ENCODE measurements at regions of chr5 and their contacts with region 1.

Region 1: GRCh38 chr5:95631991-95632675 is 12.2 kb downstream of the GPR150 start:
- DNase-seq: peak; percentile 85
- ATAC-seq: peak; percentile 100
- H3K4me3 Mint-ChIP-seq: no peak overlapping the region
- H3K27ac Mint-ChIP-seq: peak overlapping the region; percentile 83
- H3K4me1 Mint-ChIP-seq: peaks cover 15% of the 10 kb centered on the region
- H3K27me3 Mint-ChIP-seq: peaks cover 11% of the 10 kb centered on the region

Region 2: DNA sequence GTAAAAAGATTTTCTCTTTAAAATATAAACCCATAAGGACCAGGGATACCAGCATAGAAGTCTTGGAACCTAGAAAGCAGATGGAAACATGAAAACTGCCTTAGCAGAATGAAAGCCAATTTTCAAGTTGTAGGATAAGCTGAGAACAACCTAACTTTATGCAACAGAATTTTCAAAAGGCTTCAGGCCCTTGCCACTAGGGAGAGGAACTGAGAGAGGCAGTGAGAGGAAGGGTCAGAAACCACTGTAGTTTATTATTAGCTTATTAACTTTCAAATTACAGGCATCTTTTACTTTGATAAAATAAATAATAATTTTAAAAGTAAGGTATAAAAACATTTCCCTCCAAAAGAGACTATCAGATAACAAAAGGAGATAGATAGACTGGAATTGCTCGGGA is 207.6 kb before region 1 on chr5:
- CTCF ChIA-PET with region 1: no interaction called
- DNase-seq: no peak
- ATAC-seq: no peak
- H3K4me3 Mint-ChIP-seq: no peak overlapping the region
- H3K27ac Mint-ChIP-seq: no peak overlapping the region
- H3K4me1 Mint-ChIP-seq: no peaks in the 10 kb centered on the region
- H3K27me3 Mint-ChIP-seq: no peaks in the 10 kb centered on the region

Region 3: GRCh38 chr5:95526871-95527270 is 105.3 kb before region 1 on chr5:
- CTCF ChIA-PET with region 1: no interaction called
- DNase-seq: no peak
- ATAC-seq: no peak
- H3K4me3 Mint-ChIP-seq: no peak overlapping the region
- H3K27ac Mint-ChIP-seq: no peak overlapping the region
- H3K4me1 Mint-ChIP-seq: no peaks in the 10 kb centered on the region
- H3K27me3 Mint-ChIP-seq: no peaks in the 10 kb centered on the region

Region 4: DNA sequence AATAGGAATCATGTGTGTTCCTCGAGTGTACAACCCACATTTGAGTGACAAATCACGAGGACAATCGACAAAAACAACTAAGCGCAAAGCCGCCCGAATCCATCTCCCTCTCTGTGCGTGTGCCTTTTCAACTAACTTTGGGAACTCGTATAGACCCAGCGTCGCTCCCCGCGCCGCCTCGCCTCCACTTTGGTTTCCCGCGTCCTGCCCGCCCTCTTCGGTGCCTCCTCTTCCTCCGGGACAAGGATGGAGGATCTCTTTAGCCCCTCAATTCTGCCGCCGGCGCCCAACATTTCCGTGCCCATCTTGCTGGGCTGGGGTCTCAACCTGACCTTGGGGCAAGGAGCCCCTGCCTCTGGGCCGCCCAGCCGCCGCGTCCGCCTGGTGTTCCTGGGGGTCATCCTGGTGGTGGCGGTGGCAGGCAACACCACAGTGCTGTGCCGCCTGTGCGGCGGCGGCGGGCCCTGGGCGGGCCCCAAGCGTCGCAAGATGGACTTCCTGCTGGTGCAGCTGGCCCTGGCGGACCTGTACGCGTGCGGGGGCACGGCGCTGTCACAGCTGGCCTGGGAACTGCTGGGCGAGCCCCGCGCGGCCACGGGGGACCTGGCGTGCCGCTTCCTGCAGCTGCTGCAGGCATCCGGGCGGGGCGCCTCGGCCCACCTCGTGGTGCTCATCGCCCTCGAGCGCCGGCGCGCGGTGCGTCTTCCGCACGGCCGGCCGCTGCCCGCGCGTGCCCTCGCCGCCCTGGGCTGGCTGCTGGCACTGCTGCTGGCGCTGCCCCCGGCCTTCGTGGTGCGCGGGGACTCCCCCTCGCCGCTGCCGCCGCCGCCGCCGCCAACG is 11.9 kb before region 1 on chr5 and contains the start of gene GPR150:
- CTCF ChIA-PET with region 1: interaction called, 11 read pairs
- DNase-seq: peak; percentile 78
- ATAC-seq: peak; percentile 76
- H3K4me3 Mint-ChIP-seq: peak within 1 kb of the TSS; percentile 80
- H3K27ac Mint-ChIP-seq: peak within 1 kb of the TSS; percentile 67
- H3K4me1 Mint-ChIP-seq: peaks cover 35% of the 10 kb centered on the region
- H3K27me3 Mint-ChIP-seq: peaks cover 14% of the 10 kb centered on the region
- total RNA-seq, gene GPR150: 0.28 to 0.58 TPM

Region 5: GRCh38 chr5:95686651-95687050 is 54.5 kb after region 1 on chr5:
- CTCF ChIA-PET with region 1: no interaction called
- DNase-seq: no peak
- ATAC-seq: no peak
- H3K4me3 Mint-ChIP-seq: no peak overlapping the region
- H3K27ac Mint-ChIP-seq: no peak overlapping the region
- H3K4me1 Mint-ChIP-seq: no peaks in the 10 kb centered on the region
- H3K27me3 Mint-ChIP-seq: peaks cover 45% of the 10 kb centered on the region